ENCODE measurements at regions of chr7 and their contacts with region 1.

Region 1: GRCh38 chr7:55432939-55433784 is 68.0 kb downstream of the LANCL2 start:
- DNase-seq: no peak
- H3K4me3 Mint-ChIP-seq: no peak overlapping the region
- H3K27ac Mint-ChIP-seq: no peak overlapping the region
- H3K4me1 Mint-ChIP-seq: peaks cover 4% of the 10 kb centered on the region
- H3K27me3 Mint-ChIP-seq: no peaks in the 10 kb centered on the region

Region 2: GRCh38 chr7:55533050-55533728 is 100.0 kb after region 1 on chr7:
- intact Hi-C with region 1: no loop called
- DNase-seq: peak; percentile 74
- H3K4me3 Mint-ChIP-seq: peak overlapping the region; percentile 53
- H3K27ac Mint-ChIP-seq: peak overlapping the region; percentile 96
- H3K4me1 Mint-ChIP-seq: peaks cover 71% of the 10 kb centered on the region
- H3K27me3 Mint-ChIP-seq: no peaks in the 10 kb centered on the region

Region 3: GRCh38 chr7:55593515-55594318 is 160.6 kb after region 1 on chr7:
- intact Hi-C with region 1: loop called (anchors 2 kb)
- DNase-seq: peak; percentile 42
- H3K4me3 Mint-ChIP-seq: no peak overlapping the region
- H3K27ac Mint-ChIP-seq: no peak overlapping the region
- H3K4me1 Mint-ChIP-seq: no peaks in the 10 kb centered on the region
- H3K27me3 Mint-ChIP-seq: peaks cover 5% of the 10 kb centered on the region

Measured in activated T-helper 2 cell treated with anti-CD3 and anti-CD28 coated beads, Interferon-gamma antibody, Interleukin-2, Interleukin-4, amounts not matched to agents 10 μg/mL and 5 μg/mL and 100 μg/mL, durations not matched to agents 14 hours and 24 hours and 36 hours (primary cell).